Mammary epithelial cell (primary cell): ENCODE measurements at regions of chr1 and their contacts with region 1.

Region 1: GRCh38 chr1:8848663-8849386 is 29.7 kb downstream of the ENO1 start:
- DNase-seq: peak; percentile 86
- H3K4me3 ChIP-seq: no peak overlapping the region
- H3K27ac ChIP-seq: no peak overlapping the region
- H3K4me1 ChIP-seq: peaks cover 4% of the 10 kb centered on the region
- H3K27me3 ChIP-seq: no peaks in the 10 kb centered on the region
- CTCF ChIP-seq: peak; percentile 77 to 97

Region 2: GRCh38 chr1:8718850-8719361 is 129.9 kb before region 1 on chr1:
- CTCF ChIA-PET with region 1: no interaction called
- dilution Hi-C with region 1: no loop called
- in situ Hi-C with region 1: no loop called
- intact Hi-C with region 1: loop called (anchors 1 kb)
- DNase-seq: no peak
- H3K4me3 ChIP-seq: no peak overlapping the region
- H3K27ac ChIP-seq: no peak overlapping the region
- H3K4me1 ChIP-seq: no peaks in the 10 kb centered on the region
- H3K27me3 ChIP-seq: no peaks in the 10 kb centered on the region
- CTCF ChIP-seq: peak in 1 of 2 donors; percentile 23

Region 3: GRCh38 chr1:8727809-8728213 is 121.0 kb before region 1 on chr1:
- CTCF ChIA-PET with region 1: interaction called, 6 read pairs
- dilution Hi-C with region 1: no loop called
- in situ Hi-C with region 1: no loop called
- intact Hi-C with region 1: loop called (anchors 2 kb)
- DNase-seq: no peak
- H3K4me3 ChIP-seq: no peak overlapping the region
- H3K27ac ChIP-seq: no peak overlapping the region
- H3K4me1 ChIP-seq: peaks cover 5% of the 10 kb centered on the region
- H3K27me3 ChIP-seq: no peaks in the 10 kb centered on the region
- CTCF ChIP-seq: no peak

Region 4: GRCh38 chr1:8776104-8776503 is 72.7 kb before region 1 on chr1:
- CTCF ChIA-PET with region 1: interaction called, 10 read pairs
- dilution Hi-C with region 1: no loop called
- in situ Hi-C with region 1: no loop called
- intact Hi-C with region 1: no loop called
- DNase-seq: no peak
- H3K4me3 ChIP-seq: no peak overlapping the region
- H3K27ac ChIP-seq: no peak overlapping the region
- H3K4me1 ChIP-seq: no peaks in the 10 kb centered on the region
- H3K27me3 ChIP-seq: no peaks in the 10 kb centered on the region
- CTCF ChIP-seq: no peak

Region 5: DNA sequence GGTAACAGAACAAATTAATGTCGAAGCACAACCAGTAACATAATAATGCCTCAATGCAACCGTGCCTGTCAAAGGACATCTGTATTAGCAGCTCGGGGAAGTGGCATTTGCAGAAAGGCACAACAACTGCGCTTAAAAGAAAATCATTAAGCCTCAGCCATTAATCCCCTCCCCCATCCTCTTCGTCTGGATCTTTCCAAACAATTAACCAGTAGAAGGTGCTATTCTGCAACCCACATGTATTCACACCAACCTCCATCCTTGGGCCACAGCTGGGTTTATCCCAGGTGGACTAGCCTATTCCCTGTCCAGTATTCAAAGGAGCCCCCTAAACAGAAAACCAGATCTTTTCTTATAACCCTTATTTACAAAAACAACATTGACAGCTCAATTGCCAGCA is 34.0 kb before region 1 on chr1:
- CTCF ChIA-PET with region 1: interaction called, 8 read pairs
- dilution Hi-C with region 1: no loop called
- in situ Hi-C with region 1: no loop called
- intact Hi-C with region 1: loop called (anchors 1 kb)
- DNase-seq: peak; percentile 29
- H3K4me3 ChIP-seq: no peak overlapping the region
- H3K27ac ChIP-seq: no peak overlapping the region
- H3K4me1 ChIP-seq: peaks cover 37% of the 10 kb centered on the region
- H3K27me3 ChIP-seq: no peaks in the 10 kb centered on the region
- CTCF ChIP-seq: peak; percentile 22 to 54

Region 6: DNA sequence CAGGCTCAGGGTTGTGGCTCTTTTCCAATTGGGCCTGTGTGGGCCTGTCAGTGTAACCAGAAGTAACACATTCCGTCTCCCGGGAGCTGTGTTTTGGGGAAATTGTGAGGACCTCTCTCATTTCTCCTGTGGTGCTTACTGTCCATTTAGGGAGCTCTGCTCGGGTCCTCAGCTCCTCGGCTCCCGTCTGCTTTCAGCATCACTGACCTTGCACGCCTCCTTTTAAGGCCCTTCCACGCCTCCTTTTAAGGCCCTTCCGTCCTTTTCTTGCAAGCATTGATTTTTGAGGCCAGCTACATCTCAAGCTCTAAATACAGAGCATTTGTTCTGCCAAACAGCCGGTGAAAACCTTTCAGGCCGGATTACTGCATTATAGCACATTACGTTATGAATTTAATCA is 106.6 kb after region 1 on chr1:
- CTCF ChIA-PET with region 1: no interaction called
- dilution Hi-C with region 1: no loop called
- in situ Hi-C with region 1: no loop called
- intact Hi-C with region 1: no loop called
- DNase-seq: no peak
- H3K4me3 ChIP-seq: no peak overlapping the region
- H3K27ac ChIP-seq: no peak overlapping the region
- H3K4me1 ChIP-seq: no peaks in the 10 kb centered on the region
- H3K27me3 ChIP-seq: no peaks in the 10 kb centered on the region
- CTCF ChIP-seq: no peak